CD8-positive, alpha-beta T cell (primary cell): ENCODE measurements at regions of chr6 and their contacts with region 1.

Region 1: GRCh38 chr6:42745707-42746462 is at the start of gene TBCC:
- DNase-seq: peak; percentile 87 to 98 (median 93)
- ATAC-seq: peak; percentile 82
- H3K4me3 ChIP-seq: peak within 1 kb of the TSS; percentile 76 to 84
- H3K4me3 Mint-ChIP-seq: peak within 1 kb of the TSS; percentile 100
- H3K27ac ChIP-seq: peak within 1 kb of the TSS; percentile 86 to 89
- H3K27ac Mint-ChIP-seq: peak within 1 kb of the TSS; percentile 100
- H3K4me1 ChIP-seq: peaks cover 36% of the 10 kb centered on the region
- H3K4me1 Mint-ChIP-seq: peaks cover 27% of the 10 kb centered on the region
- H3K27me3 ChIP-seq: no peaks in the 10 kb centered on the region
- H3K27me3 Mint-ChIP-seq: no peaks in the 10 kb centered on the region
- CTCF ChIP-seq: no peak
- total RNA-seq, gene TBCC: 70.5 to 74.1 TPM

Region 2: GRCh38 chr6:42766141-42766670 is 20.3 kb after region 1 on chr6:
- CTCF ChIA-PET with region 1: interaction called, 27 read pairs
- POLR2A ChIA-PET with region 1: interaction called, 312 read pairs
- intact Hi-C with region 1: loop called (anchors 1 kb)
- DNase-seq: peak in 2 of 9 experiments; percentile 33 to 39
- ATAC-seq: no peak
- H3K4me3 ChIP-seq: no peak overlapping the region
- H3K4me3 Mint-ChIP-seq: no peak overlapping the region
- H3K27ac ChIP-seq: no peak overlapping the region
- H3K27ac Mint-ChIP-seq: no peak overlapping the region
- H3K4me1 ChIP-seq: peaks cover 18% of the 10 kb centered on the region
- H3K4me1 Mint-ChIP-seq: peaks cover 40% of the 10 kb centered on the region
- H3K27me3 ChIP-seq: no peaks in the 10 kb centered on the region
- H3K27me3 Mint-ChIP-seq: no peaks in the 10 kb centered on the region
- CTCF ChIP-seq: no peak

Region 3: GRCh38 chr6:42782622-42783176 is 36.8 kb after region 1 on chr6:
- CTCF ChIA-PET with region 1: interaction called, 50 read pairs
- POLR2A ChIA-PET with region 1: interaction called, 372 read pairs
- intact Hi-C with region 1: loop called (anchors 1 kb)
- DNase-seq: peak; percentile 62 to 90 (median 78)
- ATAC-seq: peak; percentile 53
- H3K4me3 ChIP-seq: peak overlapping the region; percentile 74 to 98
- H3K4me3 Mint-ChIP-seq: peak overlapping the region; percentile 96
- H3K27ac ChIP-seq: peak overlapping the region; percentile 100
- H3K27ac Mint-ChIP-seq: peak overlapping the region; percentile 100
- H3K4me1 ChIP-seq: peaks cover 46% of the 10 kb centered on the region
- H3K4me1 Mint-ChIP-seq: peaks cover 26% of the 10 kb centered on the region
- H3K27me3 ChIP-seq: no peaks in the 10 kb centered on the region
- H3K27me3 Mint-ChIP-seq: no peaks in the 10 kb centered on the region
- CTCF ChIP-seq: no peak

Region 4: GRCh38 chr6:42890311-42891198 is 144.7 kb after region 1 on chr6:
- CTCF ChIA-PET with region 1: no interaction called
- POLR2A ChIA-PET with region 1: interaction called, 15 read pairs
- intact Hi-C with region 1: loop called (anchors 1 kb)
- DNase-seq: peak; percentile 77 to 94 (median 90)
- ATAC-seq: peak; percentile 95
- H3K4me3 ChIP-seq: peak overlapping the region; percentile 92 to 99
- H3K4me3 Mint-ChIP-seq: peak overlapping the region; percentile 92
- H3K27ac ChIP-seq: peak overlapping the region; percentile 91
- H3K27ac Mint-ChIP-seq: peak overlapping the region; percentile 95
- H3K4me1 ChIP-seq: peaks cover 10% of the 10 kb centered on the region
- H3K4me1 Mint-ChIP-seq: peaks cover 19% of the 10 kb centered on the region
- H3K27me3 ChIP-seq: no peaks in the 10 kb centered on the region
- H3K27me3 Mint-ChIP-seq: no peaks in the 10 kb centered on the region
- CTCF ChIP-seq: no peak

Region 5: GRCh38 chr6:43053545-43054205 is 307.8 kb after region 1 on chr6 and contains the start of gene CUL7:
- CTCF ChIA-PET with region 1: no interaction called
- POLR2A ChIA-PET with region 1: interaction called, 4 read pairs
- intact Hi-C with region 1: loop called in 1 of 2 experiments (anchors 2 kb)
- DNase-seq: peak; percentile 71 to 94 (median 91)
- ATAC-seq: peak; percentile 99
- H3K4me3 ChIP-seq: peak within 1 kb of the TSS; percentile 81 to 83
- H3K4me3 Mint-ChIP-seq: peak within 1 kb of the TSS; percentile 92
- H3K27ac ChIP-seq: peak within 1 kb of the TSS; percentile 79 to 89
- H3K27ac Mint-ChIP-seq: peak within 1 kb of the TSS; percentile 97
- H3K4me1 ChIP-seq: peaks cover 25% of the 10 kb centered on the region
- H3K4me1 Mint-ChIP-seq: peaks cover 48% of the 10 kb centered on the region
- H3K27me3 ChIP-seq: no peaks in the 10 kb centered on the region
- H3K27me3 Mint-ChIP-seq: no peaks in the 10 kb centered on the region
- CTCF ChIP-seq: no peak
- total RNA-seq, gene CUL7: 5.2 to 5.4 TPM